ENCODE measurements at regions of chr9 and their contacts with region 1.

Region 1: DNA sequence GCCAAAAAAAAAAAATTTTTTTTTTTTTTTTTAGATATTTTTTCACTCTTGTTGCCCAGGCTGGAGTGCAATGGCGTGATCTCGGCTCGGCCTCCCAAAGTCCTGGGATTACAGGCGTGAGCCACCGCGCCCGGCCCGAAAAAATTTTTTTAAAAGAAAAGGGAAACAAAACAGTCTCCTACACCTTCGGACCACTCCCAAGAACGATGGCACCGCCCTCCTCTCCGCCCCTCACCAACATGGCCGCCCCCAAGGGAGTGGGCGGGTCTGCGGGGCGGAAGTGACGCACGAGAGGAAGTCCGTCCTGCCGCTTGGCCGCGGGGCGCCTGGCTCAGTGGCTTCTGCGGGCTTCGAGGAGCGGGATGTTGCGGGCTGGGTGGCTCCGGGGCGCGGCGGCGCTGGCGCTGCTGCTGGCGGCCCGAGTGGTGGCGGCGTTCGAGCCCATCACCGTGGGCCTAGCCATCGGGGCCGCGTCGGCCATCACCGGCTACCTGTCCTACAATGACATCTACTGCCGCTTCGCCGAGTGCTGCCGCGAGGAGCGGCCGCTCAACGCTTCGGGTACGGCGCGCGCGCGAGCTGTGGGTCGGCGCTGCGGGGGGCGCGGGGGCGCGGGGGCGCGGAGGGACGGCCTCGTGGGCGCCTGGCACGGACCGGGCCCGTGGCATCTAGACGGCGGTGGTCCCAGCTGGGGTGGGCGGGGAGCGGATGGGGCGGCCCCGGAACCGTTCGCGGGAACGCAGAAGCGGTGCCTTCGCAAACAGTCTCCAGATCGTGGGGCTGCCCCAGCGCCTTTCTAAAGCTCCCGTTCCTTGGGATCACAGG is at the start of gene TOR1B:
- DNase-seq: peak; percentile 90 to 98
- H3K4me3 ChIP-seq: peak within 1 kb of the TSS; percentile 93
- H3K27ac ChIP-seq: peak within 1 kb of the TSS; percentile 27; the same call in 1 of the 2 replicates
- H3K4me1 ChIP-seq: peaks cover 7% of the 10 kb centered on the region
- H3K27me3 ChIP-seq: no peaks in the 10 kb centered on the region
- CTCF ChIP-seq: no peak
- total RNA-seq, gene TOR1B: 26.5 and 30.5 TPM in 2 replicates

Region 2: GRCh38 chr9:129773262-129774048 is 29.6 kb before region 1 on chr9:
- CTCF ChIA-PET with region 1: no interaction called
- POLR2A ChIA-PET with region 1: no interaction called
- intact Hi-C with region 1: no loop called
- DNase-seq: peak; percentile 97 to 100
- H3K4me3 ChIP-seq: no peak overlapping the region
- H3K27ac ChIP-seq: peak overlapping the region; percentile 91
- H3K4me1 ChIP-seq: peaks cover 62% of the 10 kb centered on the region
- H3K27me3 ChIP-seq: no peaks in the 10 kb centered on the region
- CTCF ChIP-seq: no peak

Region 3: GRCh38 chr9:129823935-129824601 is 21.0 kb after region 1 on chr9 and contains the start of gene TOR1A:
- CTCF ChIA-PET with region 1: no interaction called
- POLR2A ChIA-PET with region 1: no interaction called
- intact Hi-C with region 1: loop called (anchors 1 kb)
- DNase-seq: peak; percentile 87 to 95
- H3K4me3 ChIP-seq: peak within 1 kb of the TSS; percentile 81
- H3K27ac ChIP-seq: no peak within 1 kb of the TSS
- H3K4me1 ChIP-seq: no peaks in the 10 kb centered on the region; the same call in 1 of the 2 replicates
- H3K27me3 ChIP-seq: no peaks in the 10 kb centered on the region
- CTCF ChIP-seq: no peak
- total RNA-seq, gene TOR1A: 33.8 and 43.5 TPM in 2 replicates

Region 4: GRCh38 chr9:129835021-129835871 is 32.2 kb after region 1 on chr9 and contains the starts of genes C9orf78 and USP20:
- CTCF ChIA-PET with region 1: interaction called, 3 read pairs
- POLR2A ChIA-PET with region 1: interaction called, 12 read pairs
- intact Hi-C with region 1: no loop called
- DNase-seq: peak; percentile 84 to 98
- H3K4me3 ChIP-seq: peak within 1 kb of the TSS; percentile 78
- H3K27ac ChIP-seq: no peak within 1 kb of the TSS
- H3K4me1 ChIP-seq: peaks cover 15% of the 10 kb centered on the region
- H3K27me3 ChIP-seq: no peaks in the 10 kb centered on the region
- CTCF ChIP-seq: no peak
- total RNA-seq, gene C9orf78: 39.2 and 51.7 TPM in 2 replicates
- total RNA-seq, gene USP20: 22.1 and 27.8 TPM in 2 replicates

Region 5: DNA sequence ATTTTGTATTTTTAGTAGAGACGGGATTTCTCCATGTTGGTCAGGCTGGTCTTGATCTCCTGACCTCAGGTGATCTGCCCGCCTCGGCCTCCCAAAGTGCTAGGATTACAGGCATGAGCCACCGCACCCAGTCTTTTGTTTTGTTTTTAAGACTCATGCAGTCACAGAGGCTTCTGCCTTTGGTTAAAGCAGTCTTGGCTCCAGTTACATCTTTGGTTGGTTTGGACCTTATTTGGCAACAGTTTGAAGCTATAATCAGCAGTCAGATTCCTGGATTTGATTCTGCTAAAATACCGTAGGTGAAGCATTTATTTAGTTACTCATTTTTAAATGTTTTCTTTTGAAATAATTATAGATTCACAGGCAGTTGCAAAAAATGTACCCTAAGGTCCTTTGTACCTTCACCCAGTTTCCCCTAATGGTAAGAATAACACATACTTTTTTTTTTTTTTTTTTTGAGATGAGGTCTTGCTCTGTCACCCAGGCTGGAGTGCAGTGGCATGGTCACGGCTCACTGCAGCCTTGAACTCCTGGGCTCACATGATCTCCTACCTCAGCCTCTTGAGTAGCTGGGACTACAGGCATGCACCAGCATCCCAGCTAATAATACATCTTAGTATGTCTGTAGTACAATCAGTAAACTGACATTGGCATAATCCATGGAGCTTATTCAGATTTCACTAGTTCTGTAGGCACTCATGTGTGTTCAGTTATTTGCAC is 47.9 kb after region 1 on chr9:
- CTCF ChIA-PET with region 1: no interaction called
- POLR2A ChIA-PET with region 1: interaction called, 16 read pairs
- intact Hi-C with region 1: no loop called
- DNase-seq: no peak
- H3K4me3 ChIP-seq: no peak overlapping the region
- H3K27ac ChIP-seq: no peak overlapping the region
- H3K4me1 ChIP-seq: peaks cover 24% of the 10 kb centered on the region
- H3K27me3 ChIP-seq: no peaks in the 10 kb centered on the region
- CTCF ChIP-seq: no peak

Region 6: GRCh38 chr9:129995409-129996160 is 192.5 kb after region 1 on chr9:
- CTCF ChIA-PET with region 1: interaction called, 16 read pairs
- POLR2A ChIA-PET with region 1: no interaction called
- intact Hi-C with region 1: no loop called
- DNase-seq: peak in 1 of 2 experiments; percentile 21
- H3K4me3 ChIP-seq: no peak overlapping the region
- H3K27ac ChIP-seq: peak overlapping the region; percentile 30; the same call in 1 of the 2 replicates
- H3K4me1 ChIP-seq: peaks cover 34% of the 10 kb centered on the region
- H3K27me3 ChIP-seq: no peaks in the 10 kb centered on the region
- CTCF ChIP-seq: no peak

Measured in PC-9 (cell line).